Activated CD4-positive, alpha-beta memory T cell treated with anti-CD3 and anti-CD28 coated beads for 36 hours (primary cell): ENCODE measurements at regions of chr3 and their contacts with region 1.

Region 1: DNA sequence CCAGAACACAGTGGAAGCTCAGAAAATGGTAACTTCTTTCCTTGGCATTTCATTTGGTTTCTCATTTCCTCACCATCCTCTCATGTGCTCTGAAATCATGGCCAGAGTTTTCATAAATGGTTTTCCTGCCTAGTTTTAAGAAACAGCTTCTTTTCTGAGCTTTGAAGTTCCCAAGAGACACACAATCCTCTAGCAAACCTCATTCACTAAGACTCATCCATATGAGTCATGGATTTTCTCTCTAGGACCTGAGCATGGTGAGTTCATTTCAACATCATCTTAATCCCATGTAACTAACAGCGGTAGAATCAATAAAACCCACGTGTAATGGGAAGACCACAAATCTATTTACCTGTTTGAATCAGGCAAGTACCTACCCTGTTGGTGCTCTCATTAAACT is 274.5 kb upstream of the LRTM1 start:
- DNase-seq: no peak
- H3K4me3 Mint-ChIP-seq: no peak overlapping the region
- H3K27ac Mint-ChIP-seq: no peak overlapping the region
- H3K4me1 Mint-ChIP-seq: no peaks in the 10 kb centered on the region
- H3K27me3 Mint-ChIP-seq: no peaks in the 10 kb centered on the region

Region 2: GRCh38 chr3:55309336-55309735 is 107.0 kb after region 1 on chr3:
- CTCF ChIA-PET with region 1: no interaction called
- POLR2A ChIA-PET with region 1: no interaction called
- intact Hi-C with region 1: no loop called
- DNase-seq: no peak
- H3K4me3 Mint-ChIP-seq: no peak overlapping the region
- H3K27ac Mint-ChIP-seq: no peak overlapping the region
- H3K4me1 Mint-ChIP-seq: no peaks in the 10 kb centered on the region
- H3K27me3 Mint-ChIP-seq: no peaks in the 10 kb centered on the region

Region 3: GRCh38 chr3:55343486-55344357 is 141.4 kb after region 1 on chr3:
- CTCF ChIA-PET with region 1: no interaction called
- POLR2A ChIA-PET with region 1: no interaction called
- intact Hi-C with region 1: no loop called
- DNase-seq: no peak
- H3K4me3 Mint-ChIP-seq: no peak overlapping the region
- H3K27ac Mint-ChIP-seq: no peak overlapping the region
- H3K4me1 Mint-ChIP-seq: no peaks in the 10 kb centered on the region
- H3K27me3 Mint-ChIP-seq: no peaks in the 10 kb centered on the region

Region 4: DNA sequence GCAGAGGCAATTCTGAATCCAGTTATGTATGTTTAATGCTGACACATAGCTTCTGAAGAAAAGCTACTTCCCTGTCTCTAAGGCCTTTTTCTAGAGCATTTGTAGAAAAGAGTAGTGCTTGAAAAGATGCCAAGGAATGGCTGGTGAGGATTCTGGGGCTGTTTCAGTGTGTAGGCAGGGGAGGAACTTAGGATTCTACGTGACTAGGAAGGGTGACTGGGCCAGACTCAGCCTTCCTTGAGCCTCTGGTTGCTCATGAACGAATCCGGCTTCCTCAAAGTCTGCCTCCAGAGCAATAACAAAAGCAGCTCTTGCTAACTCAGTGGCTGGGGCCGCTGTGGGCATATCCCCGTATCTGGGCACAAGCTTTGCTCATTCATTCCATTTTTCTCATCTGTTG is 389.6 kb after region 1 on chr3:
- CTCF ChIA-PET with region 1: no interaction called
- POLR2A ChIA-PET with region 1: no interaction called
- intact Hi-C with region 1: no loop called
- DNase-seq: no peak
- H3K4me3 Mint-ChIP-seq: no peak overlapping the region
- H3K27ac Mint-ChIP-seq: no peak overlapping the region
- H3K4me1 Mint-ChIP-seq: no peaks in the 10 kb centered on the region
- H3K27me3 Mint-ChIP-seq: no peaks in the 10 kb centered on the region

Region 5: GRCh38 chr3:55721716-55722484 is 519.6 kb after region 1 on chr3:
- CTCF ChIA-PET with region 1: no interaction called
- POLR2A ChIA-PET with region 1: no interaction called
- intact Hi-C with region 1: loop called (anchors 10 kb)
- DNase-seq: no peak
- H3K4me3 Mint-ChIP-seq: no peak overlapping the region
- H3K27ac Mint-ChIP-seq: no peak overlapping the region
- H3K4me1 Mint-ChIP-seq: no peaks in the 10 kb centered on the region
- H3K27me3 Mint-ChIP-seq: no peaks in the 10 kb centered on the region